AG04449 (cell line): ENCODE measurements at regions of chr4 and their contacts with region 1.

Region 1: GRCh38 chr4:103099691-103100392 is at the start of gene BDH2:
- DNase-seq: peak; percentile 83
- H3K4me3 ChIP-seq: peak within 1 kb of the TSS; percentile 48
- CTCF ChIP-seq: peak; percentile 36

Region 2: DNA sequence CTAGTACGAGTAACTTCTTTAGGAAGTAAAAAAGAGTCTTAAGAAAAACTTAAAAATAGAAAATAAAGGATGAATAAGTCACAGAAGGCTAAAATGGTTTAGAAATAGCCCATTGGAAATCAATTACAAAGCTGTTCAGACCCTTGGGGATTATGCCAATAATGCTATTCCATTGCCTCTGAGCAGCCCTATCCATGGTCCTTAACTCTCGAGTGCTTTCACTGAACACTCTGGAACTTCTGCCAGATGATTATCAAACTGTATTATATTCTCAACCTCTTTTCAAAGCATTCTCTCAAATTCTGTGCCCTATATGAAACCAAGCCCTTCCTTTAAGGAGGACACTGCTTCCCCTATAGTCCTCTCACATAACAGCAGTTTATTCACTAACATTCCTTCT is 97.3 kb before region 1 on chr4:
- CTCF ChIA-PET with region 1: no interaction called
- POLR2A ChIA-PET with region 1: no interaction called
- DNase-seq: no peak
- H3K4me3 ChIP-seq: no peak overlapping the region
- CTCF ChIP-seq: no peak

Region 3: GRCh38 chr4:103075901-103076739 is 23.7 kb before region 1 on chr4:
- CTCF ChIA-PET with region 1: interaction called, 82 read pairs
- POLR2A ChIA-PET with region 1: interaction called, 3 read pairs
- DNase-seq: no peak
- H3K4me3 ChIP-seq: peak overlapping the region; percentile 72
- CTCF ChIP-seq: no peak

Region 4: GRCh38 chr4:103118166-103118565 is 18.3 kb after region 1 on chr4:
- CTCF ChIA-PET with region 1: interaction called, 18 read pairs
- POLR2A ChIA-PET with region 1: no interaction called
- DNase-seq: no peak
- H3K4me3 ChIP-seq: no peak overlapping the region
- CTCF ChIP-seq: no peak